HCT116 (cell line): ENCODE measurements at regions of chr10 and their contacts with region 1.

Region 1: GRCh38 chr10:11881477-11882417 is 58.6 kb downstream of the PROSER2 start:
- DNase-seq: peak; percentile 94
- ATAC-seq: peak; percentile 82
- H3K4me3 ChIP-seq: peak overlapping the region in 1 of 2 experiments; percentile 28; a peak in 2 of 4 replicates
- H3K27ac ChIP-seq: peak overlapping the region; percentile 85
- H3K4me1 ChIP-seq: peaks cover 34 to 87% of the 10 kb centered on the region in 2 experiments
- H3K27me3 ChIP-seq: no peaks in the 10 kb centered on the region
- CTCF ChIP-seq: peak in 1 of 3 experiments; percentile 45; a peak in 2 of 6 replicates
- POLR2A ChIP-seq: no peak
- RAD21 ChIP-seq: no peak

Region 2: GRCh38 chr10:11515596-11516430 is 365.9 kb before region 1 on chr10:
- CTCF ChIA-PET with region 1: no interaction called
- POLR2A ChIA-PET with region 1: no interaction called
- RAD21 ChIA-PET with region 1: no interaction called
- intact Hi-C with region 1: no loop called
- DNase-seq: peak; percentile 54
- ATAC-seq: peak; percentile 91
- H3K4me3 ChIP-seq: no peak overlapping the region
- H3K27ac ChIP-seq: no peak overlapping the region
- H3K4me1 ChIP-seq: peaks cover 0 to 14% of the 10 kb centered on the region in 2 experiments; a peak in 1 of 4 replicates
- H3K27me3 ChIP-seq: no peaks in the 10 kb centered on the region
- CTCF ChIP-seq: peak; percentile 77 to 85 (median 81)
- POLR2A ChIP-seq: no peak
- RAD21 ChIP-seq: peak; percentile 92

Region 3: GRCh38 chr10:11742779-11743298 is 138.9 kb before region 1 on chr10:
- CTCF ChIA-PET with region 1: no interaction called
- POLR2A ChIA-PET with region 1: no interaction called
- RAD21 ChIA-PET with region 1: no interaction called
- intact Hi-C with region 1: no loop called
- DNase-seq: no peak
- ATAC-seq: peak; percentile 21
- H3K4me3 ChIP-seq: peak overlapping the region; percentile 54 to 63
- H3K27ac ChIP-seq: peak overlapping the region; percentile 67; the same call in 1 of the 2 replicates
- H3K4me1 ChIP-seq: peaks cover 3 to 13% of the 10 kb centered on the region in 2 experiments; a peak in 2 of 4 replicates
- H3K27me3 ChIP-seq: no peaks in the 10 kb centered on the region
- CTCF ChIP-seq: no peak
- POLR2A ChIP-seq: no peak
- RAD21 ChIP-seq: no peak

Region 4: DNA sequence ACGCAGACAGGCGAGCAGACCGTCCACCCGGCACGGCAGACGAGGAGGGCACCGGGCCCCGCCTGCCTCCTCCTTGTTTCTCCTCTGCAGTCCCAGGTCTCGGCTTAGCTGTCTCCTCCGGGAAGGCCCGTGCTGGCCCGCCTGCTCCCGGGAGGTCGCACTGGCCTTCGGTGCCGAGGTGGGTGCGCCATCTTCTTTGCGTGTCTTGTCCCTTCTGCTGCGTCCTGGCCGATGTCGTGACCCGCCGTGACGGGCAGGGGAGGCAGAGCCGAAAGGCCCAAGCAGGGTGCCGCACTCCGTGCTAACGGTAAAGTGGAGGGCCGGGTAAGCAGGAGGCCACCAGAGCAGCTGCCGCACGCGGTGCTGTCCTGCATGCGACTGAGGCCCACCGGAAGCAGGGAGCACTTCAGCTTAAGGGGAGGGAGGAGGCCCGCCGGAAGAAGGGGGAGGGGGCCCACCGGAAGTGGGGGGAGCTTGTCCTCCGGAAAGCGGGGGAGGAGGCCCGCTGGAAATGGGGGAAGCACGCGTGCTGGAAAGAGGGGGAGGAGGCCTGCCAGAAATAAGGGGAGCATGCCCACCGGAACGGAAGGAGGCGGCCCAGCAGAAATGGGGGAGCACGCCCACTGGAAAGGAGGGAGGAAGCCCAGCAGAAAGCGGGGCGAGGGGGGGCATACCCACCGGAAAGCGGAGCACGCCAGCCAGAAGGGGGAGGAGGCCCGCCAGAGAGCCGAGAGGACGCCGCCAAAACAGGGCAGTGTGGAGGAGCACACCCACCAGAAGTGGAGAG is 12.8 kb after region 1 on chr10:
- CTCF ChIA-PET with region 1: interaction called, 3 read pairs
- POLR2A ChIA-PET with region 1: interaction called, 10 read pairs
- RAD21 ChIA-PET with region 1: no interaction called
- intact Hi-C with region 1: no loop called
- DNase-seq: no peak
- ATAC-seq: no peak
- H3K4me3 ChIP-seq: no peak overlapping the region
- H3K27ac ChIP-seq: no peak overlapping the region
- H3K4me1 ChIP-seq: peaks cover 15 to 44% of the 10 kb centered on the region in 2 experiments
- H3K27me3 ChIP-seq: no peaks in the 10 kb centered on the region
- CTCF ChIP-seq: no peak
- POLR2A ChIP-seq: no peak
- RAD21 ChIP-seq: no peak